Caco-2 (cell line): ENCODE measurements at regions of chr10 and their contacts with region 1.

Region 1: GRCh38 chr10:28628184-28628893 is 49.0 kb upstream of the BAMBI start:
- DNase-seq: peak; percentile 86 to 92
- H3K4me3 ChIP-seq: no peak overlapping the region
- H3K4me3 Mint-ChIP-seq: no peak overlapping the region
- H3K27ac Mint-ChIP-seq: no peak overlapping the region
- H3K4me1 ChIP-seq: no peaks in the 10 kb centered on the region
- H3K4me1 Mint-ChIP-seq: peaks cover 6% of the 10 kb centered on the region
- H3K27me3 ChIP-seq: no peaks in the 10 kb centered on the region
- H3K27me3 Mint-ChIP-seq: no peaks in the 10 kb centered on the region
- CTCF ChIP-seq: peak; percentile 98 to 99

Region 2: DNA sequence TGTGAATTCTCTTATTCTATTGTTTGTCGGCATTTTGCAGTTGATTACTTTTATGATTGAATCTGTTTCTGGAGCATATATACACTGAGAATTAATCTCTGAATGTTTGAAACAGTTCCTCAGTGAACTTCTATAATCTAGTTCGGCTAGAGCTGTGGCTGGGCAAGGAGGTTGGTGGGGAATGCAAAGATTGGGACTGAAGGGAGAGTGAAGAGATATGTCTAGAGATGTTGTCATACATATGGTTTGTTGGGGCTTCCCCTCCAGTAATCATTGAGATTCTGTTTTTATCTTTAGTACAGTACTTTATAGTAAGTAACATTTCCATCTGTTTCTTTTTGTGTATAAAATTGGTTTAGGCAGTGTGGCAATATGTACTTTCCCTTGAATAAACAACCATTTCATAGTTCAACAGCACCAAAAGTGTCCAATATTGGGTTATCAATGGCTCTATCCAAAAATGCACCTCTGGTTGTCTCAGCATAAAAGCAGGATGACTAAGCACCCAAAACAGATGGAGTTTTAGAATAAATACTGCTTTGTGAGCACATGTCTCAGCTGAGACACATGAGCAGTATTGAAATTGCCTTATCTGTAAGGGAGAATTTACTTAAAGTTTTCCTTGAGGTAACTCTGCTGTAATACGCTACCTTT is 58.7 kb before region 1 on chr10:
- CTCF ChIA-PET with region 1: no interaction called
- POLR2A ChIA-PET with region 1: no interaction called
- intact Hi-C with region 1: no loop called
- DNase-seq: peak in 1 of 2 experiments; percentile 27
- H3K4me3 ChIP-seq: no peak overlapping the region
- H3K4me3 Mint-ChIP-seq: no peak overlapping the region
- H3K27ac Mint-ChIP-seq: no peak overlapping the region
- H3K4me1 ChIP-seq: peaks cover 44% of the 10 kb centered on the region
- H3K4me1 Mint-ChIP-seq: peaks cover 29% of the 10 kb centered on the region
- H3K27me3 ChIP-seq: no peaks in the 10 kb centered on the region
- H3K27me3 Mint-ChIP-seq: no peaks in the 10 kb centered on the region
- CTCF ChIP-seq: no peak

Region 3: GRCh38 chr10:28663576-28664313 is 35.4 kb after region 1 on chr10:
- CTCF ChIA-PET with region 1: interaction called, 9 read pairs
- POLR2A ChIA-PET with region 1: no interaction called
- intact Hi-C with region 1: loop called (anchors 1 kb)
- DNase-seq: peak; percentile 88 to 90
- H3K4me3 ChIP-seq: no peak overlapping the region
- H3K4me3 Mint-ChIP-seq: no peak overlapping the region
- H3K27ac Mint-ChIP-seq: no peak overlapping the region
- H3K4me1 ChIP-seq: peaks cover 12% of the 10 kb centered on the region
- H3K4me1 Mint-ChIP-seq: peaks cover 34% of the 10 kb centered on the region
- H3K27me3 ChIP-seq: no peaks in the 10 kb centered on the region
- H3K27me3 Mint-ChIP-seq: peaks cover 3% of the 10 kb centered on the region
- CTCF ChIP-seq: peak; percentile 99

Region 4: GRCh38 chr10:29007748-29008610 is 379.6 kb after region 1 on chr10:
- CTCF ChIA-PET with region 1: no interaction called
- POLR2A ChIA-PET with region 1: no interaction called
- intact Hi-C with region 1: no loop called
- DNase-seq: peak; percentile 43 to 48
- H3K4me3 ChIP-seq: no peak overlapping the region
- H3K4me3 Mint-ChIP-seq: no peak overlapping the region
- H3K27ac Mint-ChIP-seq: no peak overlapping the region
- H3K4me1 ChIP-seq: peaks cover 13% of the 10 kb centered on the region; the same call in 1 of the 2 replicates
- H3K4me1 Mint-ChIP-seq: peaks cover 8% of the 10 kb centered on the region
- H3K27me3 ChIP-seq: no peaks in the 10 kb centered on the region
- H3K27me3 Mint-ChIP-seq: no peaks in the 10 kb centered on the region
- CTCF ChIP-seq: peak in 1 of 2 experiments; percentile 15

Region 5: DNA sequence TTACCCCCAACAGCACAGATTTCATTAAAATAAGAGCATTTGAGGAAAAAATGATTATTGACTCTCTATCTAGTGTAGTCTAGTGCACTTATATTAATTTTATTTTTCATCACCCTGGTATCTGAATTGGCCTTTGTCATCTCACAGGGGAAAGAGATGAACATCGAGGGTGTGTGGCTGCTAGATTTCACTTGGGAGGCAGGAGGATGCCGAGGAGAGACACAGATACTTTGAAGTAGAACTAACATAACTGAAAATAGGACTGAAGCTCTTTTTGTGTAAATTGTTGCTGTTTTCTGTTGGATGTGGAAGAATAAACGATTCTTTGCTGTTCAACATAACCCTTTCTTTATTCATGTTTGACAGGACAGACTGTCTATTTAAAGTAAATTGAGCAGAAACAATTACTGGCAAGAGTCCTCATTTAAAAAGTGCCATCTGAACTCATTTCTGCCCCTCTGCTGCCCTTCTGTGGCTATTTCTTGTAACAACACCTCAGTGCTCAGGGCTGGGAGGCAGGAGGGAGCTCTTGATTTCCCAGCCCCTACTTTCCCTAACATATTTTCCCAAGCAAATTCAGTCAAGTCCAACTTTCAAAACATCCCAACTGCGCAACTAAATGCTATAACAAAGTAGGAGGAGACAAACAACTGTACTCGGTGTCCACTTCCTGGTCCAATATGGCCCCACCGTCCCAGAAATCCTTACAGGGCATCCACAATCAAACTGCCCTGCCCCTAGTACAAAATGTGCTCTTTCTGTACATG is 676.1 kb after region 1 on chr10:
- CTCF ChIA-PET with region 1: interaction called, 8 read pairs
- POLR2A ChIA-PET with region 1: no interaction called
- intact Hi-C with region 1: loop called (anchors 1 kb)
- DNase-seq: peak; percentile 74 to 86
- H3K4me3 ChIP-seq: no peak overlapping the region
- H3K4me3 Mint-ChIP-seq: peak overlapping the region; percentile 55
- H3K27ac Mint-ChIP-seq: peak overlapping the region; percentile 48
- H3K4me1 ChIP-seq: peaks cover 14% of the 10 kb centered on the region; the same call in 1 of the 2 replicates
- H3K4me1 Mint-ChIP-seq: no peaks in the 10 kb centered on the region
- H3K27me3 ChIP-seq: no peaks in the 10 kb centered on the region
- H3K27me3 Mint-ChIP-seq: no peaks in the 10 kb centered on the region
- CTCF ChIP-seq: peak; percentile 95 to 99

Region 6: DNA sequence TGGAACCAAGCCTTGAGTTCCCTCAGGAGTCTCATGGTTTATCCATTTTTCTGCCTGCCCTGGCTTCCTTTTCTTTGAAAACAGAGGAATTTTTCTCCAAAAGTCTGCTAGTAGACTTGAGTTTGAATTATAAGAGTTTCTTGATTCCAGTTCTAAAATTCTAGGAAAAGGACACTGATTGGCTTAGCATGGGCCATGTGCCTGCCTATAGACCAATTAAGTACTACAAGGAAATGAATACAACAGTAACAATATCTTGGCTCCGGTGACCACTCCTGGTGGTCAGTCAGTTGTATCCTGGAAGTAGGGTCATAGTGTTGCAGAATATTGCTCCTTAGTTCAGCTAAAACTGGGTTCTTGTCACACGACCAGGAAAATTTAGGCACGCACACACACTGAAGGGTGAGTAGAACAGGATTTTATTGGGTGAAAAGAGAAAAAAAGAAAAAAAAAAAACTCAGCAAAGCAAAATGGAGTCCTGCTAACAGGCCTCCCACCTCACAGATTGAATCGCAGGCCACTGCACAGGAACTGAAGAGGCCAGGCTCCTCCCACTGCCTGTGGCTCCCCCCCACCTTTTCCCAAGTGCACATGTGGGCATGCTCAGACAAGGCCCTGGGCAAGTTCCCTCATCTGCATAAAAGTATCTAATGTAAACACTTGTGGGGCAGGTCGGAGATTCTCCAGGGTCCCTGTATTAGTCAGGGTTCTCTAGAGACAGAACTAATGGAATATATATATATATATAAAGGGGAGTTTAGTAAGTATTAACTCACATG is 815.6 kb after region 1 on chr10:
- CTCF ChIA-PET with region 1: no interaction called
- POLR2A ChIA-PET with region 1: no interaction called
- intact Hi-C with region 1: loop called (anchors 1 kb)
- DNase-seq: peak in 1 of 2 experiments; percentile 67
- H3K4me3 ChIP-seq: no peak overlapping the region
- H3K4me3 Mint-ChIP-seq: no peak overlapping the region
- H3K27ac Mint-ChIP-seq: no peak overlapping the region
- H3K4me1 ChIP-seq: no peaks in the 10 kb centered on the region
- H3K4me1 Mint-ChIP-seq: peaks cover 4% of the 10 kb centered on the region
- H3K27me3 ChIP-seq: no peaks in the 10 kb centered on the region
- H3K27me3 Mint-ChIP-seq: no peaks in the 10 kb centered on the region
- CTCF ChIP-seq: no peak